Naive thymus-derived CD4-positive, alpha-beta T cell (primary cell): ENCODE measurements at regions of chr7 and their contacts with region 1.

Region 1: GRCh38 chr7:73851410-73852234 is 9.3 kb upstream of the METTL27 start:
- DNase-seq: peak in 1 of 9 donors; percentile 30
- ATAC-seq: peak; percentile 71
- H3K4me3 ChIP-seq: no peak overlapping the region
- H3K4me3 Mint-ChIP-seq: peak overlapping the region in 1 of 10 donors; percentile 35
- H3K27ac ChIP-seq: no peak overlapping the region
- H3K27ac Mint-ChIP-seq: peak overlapping the region in 1 of 9 donors; percentile 52
- H3K4me1 ChIP-seq: peaks cover 0 to 5% of the 10 kb centered on the region in 2 donors
- H3K4me1 Mint-ChIP-seq: peaks cover 0 to 27% (median 0%) of the 10 kb centered on the region in 7 donors
- H3K27me3 ChIP-seq: peaks cover 0 to 3% of the 10 kb centered on the region in 2 donors
- H3K27me3 Mint-ChIP-seq: peaks cover 0 to 36% (median 3%) of the 10 kb centered on the region in 5 donors

Region 2: DNA sequence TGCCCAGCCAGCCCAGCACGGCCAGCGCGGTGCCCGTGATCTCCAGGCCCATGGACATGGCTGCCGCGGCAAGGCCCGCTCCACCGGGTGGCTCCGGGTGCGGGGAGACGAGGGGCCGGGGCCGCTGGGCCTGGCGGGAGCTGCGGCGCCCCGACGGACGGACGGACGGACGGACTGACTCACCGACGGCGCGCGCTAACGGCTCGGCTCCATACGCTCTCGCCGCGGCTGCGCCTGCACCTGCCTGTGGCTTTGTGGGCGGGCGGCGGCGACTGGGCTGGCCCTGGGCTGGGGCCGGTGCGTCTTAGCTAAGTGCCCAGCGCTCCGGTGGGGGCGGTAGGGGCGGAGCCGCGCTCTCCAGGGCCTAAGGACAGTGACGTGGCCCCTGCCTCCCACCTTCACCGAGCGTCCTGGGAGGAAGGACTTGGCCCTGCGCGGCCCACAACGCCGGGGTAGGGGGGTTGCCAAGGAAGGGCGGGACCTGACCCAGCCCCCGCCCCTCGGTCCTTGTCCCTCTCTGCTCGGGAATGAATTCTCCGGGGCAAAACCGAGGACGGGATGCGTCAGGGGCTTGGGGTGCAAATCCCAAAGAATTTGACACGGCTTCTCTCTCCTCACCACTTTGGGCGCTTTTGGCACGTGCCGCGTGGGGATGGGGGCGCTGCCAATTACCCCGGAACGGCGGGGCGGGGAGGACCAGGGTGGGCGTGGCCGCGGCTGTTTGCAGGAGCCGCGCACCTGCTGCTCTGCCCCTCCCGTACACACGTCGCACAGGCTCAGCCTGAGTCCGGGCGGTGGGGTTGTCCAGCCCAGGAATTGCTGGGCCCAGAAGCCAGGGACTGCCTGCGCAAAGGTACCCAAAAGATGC is 81.4 kb before region 1 on chr7 and contains the start of gene CLDN3:
- CTCF ChIA-PET with region 1: no interaction called
- POLR2A ChIA-PET with region 1: no interaction called
- intact Hi-C with region 1: no loop called
- DNase-seq: peak in 3 of 9 donors; percentile 8 to 22 (median 8)
- ATAC-seq: peak; percentile 42
- H3K4me3 ChIP-seq: no peak within 1 kb of the TSS
- H3K4me3 Mint-ChIP-seq: peak within 1 kb of the TSS in 7 of 10 donors; percentile 29 to 72 (median 56)
- H3K27ac ChIP-seq: no peak within 1 kb of the TSS
- H3K27ac Mint-ChIP-seq: no peak within 1 kb of the TSS
- H3K4me1 ChIP-seq: no peaks in the 10 kb centered on the region
- H3K4me1 Mint-ChIP-seq: peaks cover 0 to 12% (median 4%) of the 10 kb centered on the region in 7 donors
- H3K27me3 ChIP-seq: no peaks in the 10 kb centered on the region
- H3K27me3 Mint-ChIP-seq: peaks cover 26 to 66% (median 37%) of the 10 kb centered on the region in 5 donors
- total RNA-seq, gene CLDN3: not detected

Region 3: DNA sequence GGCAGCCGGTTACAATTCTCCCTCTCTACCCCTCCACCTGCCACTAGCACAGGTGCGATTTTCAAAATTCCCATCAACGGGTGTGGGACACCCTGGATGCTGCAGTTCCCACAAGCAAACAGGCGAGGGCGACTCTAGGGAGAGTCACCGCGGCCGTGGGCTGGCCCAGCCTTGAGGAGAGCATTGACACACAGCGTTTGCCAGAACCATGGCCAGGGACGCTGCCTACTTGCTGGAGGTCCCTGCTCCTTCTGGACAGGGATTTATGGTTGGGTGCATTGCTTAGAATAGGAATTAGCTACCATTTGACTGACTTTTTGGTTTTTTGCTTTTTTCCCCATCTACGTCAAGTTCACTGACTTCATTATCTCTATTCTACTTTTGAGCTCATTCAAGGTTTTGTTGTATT is 39.9 kb before region 1 on chr7:
- CTCF ChIA-PET with region 1: interaction called, 9 read pairs
- POLR2A ChIA-PET with region 1: no interaction called
- intact Hi-C with region 1: loop called in 1 of 2 experiments (anchors 1 kb)
- DNase-seq: peak in 7 of 9 donors; percentile 17 to 66 (median 29)
- ATAC-seq: peak; percentile 86
- H3K4me3 ChIP-seq: no peak overlapping the region
- H3K4me3 Mint-ChIP-seq: no peak overlapping the region
- H3K27ac ChIP-seq: no peak overlapping the region
- H3K27ac Mint-ChIP-seq: no peak overlapping the region
- H3K4me1 ChIP-seq: no peaks in the 10 kb centered on the region
- H3K4me1 Mint-ChIP-seq: peaks cover 0 to 2% (median 0%) of the 10 kb centered on the region in 7 donors
- H3K27me3 ChIP-seq: no peaks in the 10 kb centered on the region
- H3K27me3 Mint-ChIP-seq: peaks cover 3 to 14% (median 13%) of the 10 kb centered on the region in 5 donors